ENCODE measurements at regions of chr22 and their contacts with region 1.

Region 1: DNA sequence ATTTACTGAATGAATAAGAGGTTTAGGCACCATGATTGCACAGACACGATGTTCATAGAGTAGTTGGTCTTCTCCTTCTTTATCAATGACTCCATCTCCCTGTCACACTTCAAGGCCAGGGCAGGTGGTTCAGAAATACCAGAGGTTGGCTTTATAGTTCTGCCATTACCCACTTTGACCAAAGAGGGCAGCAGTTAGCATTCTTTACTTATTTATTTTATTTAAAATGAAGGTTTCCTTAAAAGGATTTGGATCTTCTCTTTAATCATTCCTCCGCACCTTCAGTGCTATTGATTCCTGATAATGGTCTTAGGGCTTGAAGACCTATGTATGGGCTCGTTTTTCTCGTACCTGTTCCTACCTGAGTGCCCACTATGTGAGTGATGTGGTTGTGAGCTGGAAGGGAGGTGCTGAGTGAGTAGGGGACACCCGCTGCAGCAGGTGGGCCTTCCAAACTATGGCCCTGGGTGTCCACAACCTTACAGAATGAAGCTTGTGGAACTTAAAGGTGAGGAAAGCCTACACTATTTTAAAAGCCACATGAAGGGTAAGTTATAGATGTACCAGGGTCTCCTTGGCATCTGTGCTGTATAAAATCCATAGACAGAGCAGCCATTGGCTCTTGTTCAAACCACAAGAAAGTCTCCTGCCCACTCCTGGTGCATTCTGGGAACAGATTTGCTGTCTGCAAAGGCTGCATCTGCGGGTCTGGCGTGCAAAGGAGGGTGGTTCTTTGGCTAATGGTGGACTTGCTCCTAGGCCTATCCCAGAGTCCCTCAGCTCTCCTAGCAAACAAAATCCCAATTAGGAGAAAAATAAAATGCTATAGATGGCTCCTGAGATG is 35.0 kb downstream of the TIMP3 start:
- DNase-seq: no peak
- ATAC-seq: no peak
- H3K4me3 ChIP-seq: no peak overlapping the region
- H3K27ac ChIP-seq: peak overlapping the region in 6 of 12 donors; percentile 1 to 78 (median 23)
- H3K4me1 ChIP-seq: peaks cover 14 to 100% (median 89%) of the 10 kb centered on the region in 12 donors
- H3K27me3 ChIP-seq: no peaks in the 10 kb centered on the region
- CTCF ChIP-seq: peak; percentile 28 to 63 (median 43)
- POLR2A ChIP-seq: no peak

Region 2: DNA sequence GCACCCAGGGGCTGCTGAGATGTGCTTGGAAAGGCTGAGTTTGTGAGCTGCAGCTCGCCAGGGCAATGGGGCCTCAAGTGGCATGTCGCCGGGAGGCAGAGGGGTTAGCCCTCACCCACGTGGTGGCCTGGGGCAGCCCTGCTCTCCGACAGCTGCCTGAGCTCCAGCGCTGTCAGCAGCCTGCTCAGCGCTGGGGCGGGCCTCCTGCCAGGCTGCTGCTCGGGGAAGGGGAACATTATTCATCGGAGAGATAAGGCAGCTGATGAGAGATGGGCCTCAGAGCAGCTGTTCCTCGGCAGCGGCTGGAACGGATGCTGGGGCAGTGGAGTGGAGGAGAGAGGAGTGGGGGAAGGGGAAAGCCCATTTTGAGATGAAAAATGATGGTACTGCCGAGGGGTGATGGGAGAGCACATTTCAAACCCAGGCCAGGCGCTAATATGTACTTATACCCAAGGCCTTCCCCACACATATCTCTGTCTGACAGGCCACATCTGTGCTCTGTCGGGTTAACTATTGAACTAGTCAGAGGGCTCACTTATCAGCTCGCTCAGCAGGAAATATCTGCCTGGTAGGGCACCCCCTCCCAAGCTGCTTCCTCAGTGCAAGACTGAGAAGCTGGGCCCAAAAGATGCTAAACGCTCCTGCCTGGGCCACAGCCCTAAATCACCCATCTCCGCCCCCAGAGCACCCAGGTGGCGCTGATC is 44.5 kb after region 1 on chr22:
- intact Hi-C with region 1: loop called in 2 of 10 experiments (anchors 5 to 10 kb)
- DNase-seq: peak; percentile 86 to 94 (median 92)
- ATAC-seq: peak; percentile 96 to 99 (median 98)
- H3K4me3 ChIP-seq: no peak overlapping the region
- H3K27ac ChIP-seq: peak overlapping the region in 11 of 12 donors; percentile 11 to 76 (median 49)
- H3K4me1 ChIP-seq: peaks cover 3 to 25% (median 13%) of the 10 kb centered on the region in 12 donors
- H3K27me3 ChIP-seq: no peaks in the 10 kb centered on the region
- CTCF ChIP-seq: no peak
- POLR2A ChIP-seq: no peak